CD4-positive, alpha-beta T cell (primary cell): ENCODE measurements at regions of chr16 and their contacts with region 1.

Region 1: GRCh38 chr16:57519796-57520360 is 16.5 kb downstream of the CCDC102A start:
- DNase-seq: peak; percentile 67 to 89 (median 78)
- ATAC-seq: peak; percentile 99
- H3K4me3 ChIP-seq: no peak overlapping the region
- H3K4me3 Mint-ChIP-seq: no peak overlapping the region
- H3K27ac ChIP-seq: no peak overlapping the region
- H3K27ac Mint-ChIP-seq: no peak overlapping the region
- H3K4me1 ChIP-seq: peaks cover 7% of the 10 kb centered on the region
- H3K4me1 Mint-ChIP-seq: peaks cover 5% of the 10 kb centered on the region
- H3K27me3 ChIP-seq: no peaks in the 10 kb centered on the region
- H3K27me3 Mint-ChIP-seq: no peaks in the 10 kb centered on the region
- CTCF ChIP-seq: peak; percentile 98

Region 2: DNA sequence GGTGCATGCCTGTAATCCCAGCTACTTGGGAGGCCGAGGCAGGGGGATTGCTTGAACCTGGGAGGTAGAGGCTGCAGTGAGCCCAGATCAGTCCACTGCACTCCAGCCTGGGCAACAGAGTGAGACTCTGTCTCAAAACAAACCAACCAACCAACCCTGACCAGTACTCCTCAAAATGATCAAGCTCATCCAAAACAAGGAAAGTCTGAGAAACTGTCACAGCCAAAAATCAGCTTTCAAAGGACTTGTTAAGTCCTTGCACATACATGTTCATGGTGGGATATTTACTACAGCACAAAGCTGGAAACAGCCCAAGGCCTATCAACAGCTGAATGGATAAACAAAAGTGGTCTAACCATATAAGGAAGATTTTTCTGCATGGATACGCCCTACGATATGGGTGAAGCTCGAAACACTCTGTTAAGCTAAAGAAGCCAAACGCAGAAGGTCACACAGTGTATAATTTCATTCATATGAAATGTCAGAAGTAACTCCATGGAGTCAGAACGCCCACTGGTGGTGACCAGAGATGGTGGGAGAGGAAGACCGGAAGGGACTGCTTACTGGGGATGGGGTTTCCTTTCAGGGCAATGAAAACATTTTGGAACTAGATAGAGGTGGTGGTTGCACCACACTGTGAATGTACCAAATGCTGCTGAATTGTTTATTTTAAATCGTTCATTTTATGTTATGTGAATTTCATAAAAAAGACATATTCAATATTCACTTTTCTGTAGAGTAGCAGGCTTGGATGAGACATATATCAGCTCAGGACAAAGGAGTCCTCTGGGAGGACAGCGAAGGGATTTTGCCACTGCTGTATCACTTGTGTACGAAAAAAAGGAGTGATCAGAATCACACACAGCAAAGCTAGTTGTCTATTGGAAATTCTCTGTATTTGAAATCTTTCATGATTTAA is 97.6 kb before region 1 on chr16:
- CTCF ChIA-PET with region 1: interaction called, 14 read pairs
- POLR2A ChIA-PET with region 1: interaction called, 3 read pairs
- intact Hi-C with region 1: loop called (anchors 1 kb)
- DNase-seq: no peak
- ATAC-seq: no peak
- H3K4me3 ChIP-seq: no peak overlapping the region
- H3K4me3 Mint-ChIP-seq: no peak overlapping the region
- H3K27ac ChIP-seq: no peak overlapping the region
- H3K27ac Mint-ChIP-seq: no peak overlapping the region
- H3K4me1 ChIP-seq: peaks cover 16% of the 10 kb centered on the region
- H3K4me1 Mint-ChIP-seq: peaks cover 14% of the 10 kb centered on the region
- H3K27me3 ChIP-seq: no peaks in the 10 kb centered on the region
- H3K27me3 Mint-ChIP-seq: no peaks in the 10 kb centered on the region
- CTCF ChIP-seq: no peak

Region 3: GRCh38 chr16:57462209-57462977 is 57.5 kb before region 1 on chr16 and contains the start of gene POLR2C:
- CTCF ChIA-PET with region 1: interaction called, 11 read pairs
- POLR2A ChIA-PET with region 1: interaction called, 13 read pairs
- intact Hi-C with region 1: no loop called
- DNase-seq: peak; percentile 86 to 96 (median 92)
- ATAC-seq: peak; percentile 96
- H3K4me3 ChIP-seq: peak within 1 kb of the TSS; percentile 79
- H3K4me3 Mint-ChIP-seq: peak within 1 kb of the TSS; percentile 100
- H3K27ac ChIP-seq: peak within 1 kb of the TSS; percentile 33 to 52
- H3K27ac Mint-ChIP-seq: peak within 1 kb of the TSS; percentile 92
- H3K4me1 ChIP-seq: peaks cover 32% of the 10 kb centered on the region
- H3K4me1 Mint-ChIP-seq: peaks cover 43% of the 10 kb centered on the region
- H3K27me3 ChIP-seq: no peaks in the 10 kb centered on the region
- H3K27me3 Mint-ChIP-seq: no peaks in the 10 kb centered on the region
- CTCF ChIP-seq: peak; percentile 99
- total RNA-seq, gene POLR2C: 124 to 125 TPM

Region 4: GRCh38 chr16:57485916-57486857 is 33.7 kb before region 1 on chr16 and contains the start of gene DOK4:
- CTCF ChIA-PET with region 1: interaction called, 22 read pairs
- POLR2A ChIA-PET with region 1: interaction called, 4 read pairs
- intact Hi-C with region 1: no loop called
- DNase-seq: peak; percentile 63 to 88 (median 76)
- ATAC-seq: peak; percentile 96
- H3K4me3 ChIP-seq: peak within 1 kb of the TSS; percentile 76
- H3K4me3 Mint-ChIP-seq: peak within 1 kb of the TSS; percentile 89
- H3K27ac ChIP-seq: no peak within 1 kb of the TSS
- H3K27ac Mint-ChIP-seq: peak within 1 kb of the TSS; percentile 69
- H3K4me1 ChIP-seq: peaks cover 22% of the 10 kb centered on the region
- H3K4me1 Mint-ChIP-seq: peaks cover 34% of the 10 kb centered on the region
- H3K27me3 ChIP-seq: no peaks in the 10 kb centered on the region
- H3K27me3 Mint-ChIP-seq: no peaks in the 10 kb centered on the region
- CTCF ChIP-seq: no peak
- total RNA-seq, gene DOK4: 2.4 to 2.9 TPM

Region 5: DNA sequence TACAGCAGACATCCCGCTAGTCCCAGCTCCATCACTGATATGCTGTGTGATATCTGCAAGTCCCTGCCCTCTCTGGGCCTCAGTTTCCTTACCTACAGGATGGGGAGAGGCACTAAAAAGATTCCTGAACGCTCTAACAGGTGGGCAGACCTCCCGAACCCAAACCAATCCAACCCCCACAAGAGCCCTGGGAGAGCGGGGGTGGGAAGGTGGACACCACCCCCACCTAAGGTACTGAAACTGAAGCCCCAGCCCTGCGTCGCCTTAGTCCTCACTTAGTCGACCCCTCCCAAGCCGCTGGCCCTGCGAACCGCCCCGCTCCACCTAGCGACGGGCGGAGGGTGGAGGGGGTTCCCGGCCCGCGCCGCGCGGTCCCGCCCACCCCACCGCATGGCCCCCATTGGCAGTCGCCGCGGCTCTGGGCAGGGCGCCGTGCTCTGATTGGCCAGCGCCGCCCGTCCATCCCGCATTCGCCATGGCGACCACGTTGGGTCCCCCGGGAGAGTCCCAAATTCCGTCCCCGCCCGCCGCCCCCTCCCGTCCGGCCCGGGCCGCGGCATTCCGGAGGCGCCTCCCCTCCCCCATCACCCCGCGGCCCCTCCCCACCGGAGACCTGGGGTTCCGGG is 15.9 kb after region 1 on chr16:
- CTCF ChIA-PET with region 1: interaction called, 26 read pairs
- POLR2A ChIA-PET with region 1: interaction called, 6 read pairs
- intact Hi-C with region 1: loop called in 1 of 2 experiments (anchors 2 kb)
- DNase-seq: peak; percentile 87 to 98 (median 91)
- ATAC-seq: peak; percentile 85
- H3K4me3 ChIP-seq: peak overlapping the region; percentile 59
- H3K4me3 Mint-ChIP-seq: peak overlapping the region; percentile 89
- H3K27ac ChIP-seq: peak overlapping the region; percentile 94
- H3K27ac Mint-ChIP-seq: peak overlapping the region; percentile 96
- H3K4me1 ChIP-seq: peaks cover 79% of the 10 kb centered on the region
- H3K4me1 Mint-ChIP-seq: peaks cover 78% of the 10 kb centered on the region
- H3K27me3 ChIP-seq: no peaks in the 10 kb centered on the region
- H3K27me3 Mint-ChIP-seq: no peaks in the 10 kb centered on the region
- CTCF ChIP-seq: no peak